HCT116 (cell line): ENCODE measurements at regions of chrX and their contacts with region 1.

Region 1: DNA sequence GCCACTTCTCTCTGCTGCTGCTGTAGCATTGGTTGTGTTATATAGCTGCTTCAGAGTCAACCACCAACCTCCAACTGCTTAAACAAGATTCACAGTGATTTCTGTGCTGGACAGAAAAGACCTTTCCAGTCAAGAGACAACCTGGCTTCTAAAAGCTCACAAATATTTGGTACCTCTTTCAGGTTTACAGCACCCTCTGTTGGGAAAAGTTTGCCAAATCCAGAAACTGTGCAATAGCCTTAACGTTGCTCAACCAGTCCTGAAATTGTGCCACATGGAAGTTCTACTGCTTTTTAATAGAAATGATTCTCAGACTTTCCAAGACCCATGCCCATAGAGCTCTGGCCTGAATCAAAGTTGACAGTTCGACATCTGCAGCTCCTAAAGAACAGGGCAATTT is 842.1 kb upstream of the HTR2C start:
- DNase-seq: peak; percentile 18
- ATAC-seq: peak; percentile 67; the same call in 1 of the 2 replicates
- H3K4me3 ChIP-seq: no peak overlapping the region
- H3K27ac ChIP-seq: no peak overlapping the region
- H3K4me1 ChIP-seq: no peaks in the 10 kb centered on the region
- H3K27me3 ChIP-seq: no peaks in the 10 kb centered on the region
- CTCF ChIP-seq: peak; percentile 19 to 41 (median 30); a peak in 3 of 6 replicates
- POLR2A ChIP-seq: no peak
- RAD21 ChIP-seq: peak; percentile 65

Region 2: DNA sequence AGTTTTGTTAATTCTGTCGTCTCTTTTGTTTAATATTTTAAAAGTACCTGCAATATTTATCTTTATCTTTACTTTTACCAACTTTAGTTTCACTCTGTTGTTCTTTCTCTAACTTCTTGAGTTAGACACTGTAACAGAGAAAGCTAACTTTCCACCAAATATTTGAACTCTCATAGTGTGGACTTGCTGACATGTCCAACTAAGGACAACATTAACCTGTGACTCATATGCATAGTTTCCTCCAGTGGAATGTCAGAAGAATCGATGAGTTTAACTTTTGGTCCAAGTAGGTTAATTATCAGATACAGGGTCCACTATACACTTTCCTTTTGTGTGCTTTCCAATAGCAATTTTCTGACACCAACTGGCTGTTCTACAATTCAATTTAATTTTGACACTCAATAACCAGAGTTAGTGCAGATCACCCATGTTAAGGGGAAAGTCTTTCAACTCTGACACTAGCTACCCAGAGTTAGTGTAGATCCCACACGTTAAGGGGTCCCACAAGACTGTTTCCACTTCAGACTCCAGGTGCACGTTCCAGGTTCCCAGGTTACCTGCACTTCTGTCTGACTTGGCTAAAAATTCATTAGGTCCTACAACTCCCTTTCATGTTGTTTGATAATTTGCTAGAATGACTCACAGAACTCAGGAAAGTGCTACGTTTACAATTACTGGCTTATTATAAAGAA is 342.1 kb before region 1 on chrX:
- CTCF ChIA-PET with region 1: no interaction called
- POLR2A ChIA-PET with region 1: no interaction called
- RAD21 ChIA-PET with region 1: no interaction called
- intact Hi-C with region 1: loop called (anchors 10 kb)
- DNase-seq: peak; percentile 3
- ATAC-seq: peak; percentile 64
- H3K4me3 ChIP-seq: peak overlapping the region in 1 of 2 experiments; percentile 25; a peak in 2 of 4 replicates
- H3K27ac ChIP-seq: peak overlapping the region; percentile 52; the same call in 1 of the 2 replicates
- H3K4me1 ChIP-seq: peaks cover 12 to 18% of the 10 kb centered on the region in 2 experiments
- H3K27me3 ChIP-seq: no peaks in the 10 kb centered on the region
- CTCF ChIP-seq: no peak
- POLR2A ChIP-seq: no peak
- RAD21 ChIP-seq: no peak